Activated T-helper 1 cell treated with anti-CD3 and anti-CD28 coated beads, Interleukin-12 subunit alpha, Interleukin-12 subunit beta, Interleukin-2, Interleukin-4 antibody, amounts not matched to agents 30 ng/mL and 10 ng/mL and 1 ng/mL, durations not matched to agents 14 hours and 24 hours and 36 hours (primary cell): ENCODE measurements at regions of chr19 and their contacts with region 1.

Region 1: GRCh38 chr19:43784981-43785808 is 4.4 kb upstream of the KCNN4 start:
- DNase-seq: peak; percentile 51
- H3K4me3 Mint-ChIP-seq: peak overlapping the region; percentile 66
- H3K27ac Mint-ChIP-seq: peak overlapping the region; percentile 92
- H3K4me1 Mint-ChIP-seq: peaks cover 41% of the 10 kb centered on the region
- H3K27me3 Mint-ChIP-seq: no peaks in the 10 kb centered on the region

Region 2: GRCh38 chr19:43700395-43701000 is 84.7 kb before region 1 on chr19:
- intact Hi-C with region 1: loop called (anchors 1 kb)
- DNase-seq: no peak
- H3K4me3 Mint-ChIP-seq: peak overlapping the region; percentile 72
- H3K27ac Mint-ChIP-seq: peak overlapping the region; percentile 73
- H3K4me1 Mint-ChIP-seq: peaks cover 18% of the 10 kb centered on the region
- H3K27me3 Mint-ChIP-seq: peaks cover 11% of the 10 kb centered on the region

Region 3: DNA sequence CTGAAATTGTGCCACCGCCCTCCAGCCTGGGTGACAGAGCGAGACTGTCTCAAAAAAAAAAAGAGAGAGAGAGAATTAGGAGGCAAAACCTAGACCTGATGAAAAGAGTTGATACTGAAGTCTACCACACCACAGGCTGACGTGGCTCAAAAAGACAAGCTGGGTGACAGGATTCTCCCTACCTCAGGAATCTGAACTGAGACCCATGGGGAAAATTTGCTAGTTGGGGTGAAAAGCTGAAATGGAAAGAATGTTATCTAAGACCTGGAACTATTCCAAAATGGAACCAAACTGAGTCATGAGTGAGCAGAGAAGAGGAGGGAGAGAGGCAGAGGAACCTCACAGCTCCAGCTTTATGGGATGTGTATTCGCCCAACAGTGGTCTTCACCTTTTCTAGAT is 42.2 kb before region 1 on chr19:
- intact Hi-C with region 1: loop called (anchors 1 kb)
- DNase-seq: no peak
- H3K4me3 Mint-ChIP-seq: no peak overlapping the region
- H3K27ac Mint-ChIP-seq: no peak overlapping the region
- H3K4me1 Mint-ChIP-seq: peaks cover 39% of the 10 kb centered on the region
- H3K27me3 Mint-ChIP-seq: no peaks in the 10 kb centered on the region